ENCODE measurements at regions of chr4 and their contacts with region 1.

Region 1: GRCh38 chr4:152385551-152385950 is 150.3 kb downstream of the FBXW7 start:
- DNase-seq: no peak
- ATAC-seq: peak in 1 of 8 donors; percentile 47
- H3K4me3 ChIP-seq: no peak overlapping the region
- H3K27ac ChIP-seq: no peak overlapping the region
- H3K4me1 ChIP-seq: peaks cover 0 to 31% (median 9%) of the 10 kb centered on the region in 9 donors
- H3K27me3 ChIP-seq: no peaks in the 10 kb centered on the region
- CTCF ChIP-seq: peak; percentile 37 to 80 (median 69)

Region 2: GRCh38 chr4:151117371-151117962 is 1268.1 kb before region 1 on chr4:
- intact Hi-C with region 1: loop called in 1 of 10 experiments (anchors 10 kb)
- DNase-seq: peak in 1 of 2 donors; percentile 68
- ATAC-seq: peak in 7 of 8 donors; percentile 47 to 66 (median 59)
- H3K4me3 ChIP-seq: no peak overlapping the region
- H3K27ac ChIP-seq: peak overlapping the region in 4 of 10 donors; percentile 20 to 42 (median 34)
- H3K4me1 ChIP-seq: peaks cover 0 to 24% (median 9%) of the 10 kb centered on the region in 9 donors
- H3K27me3 ChIP-seq: no peaks in the 10 kb centered on the region
- CTCF ChIP-seq: peak; percentile 41 to 85 (median 77)

Region 3: DNA sequence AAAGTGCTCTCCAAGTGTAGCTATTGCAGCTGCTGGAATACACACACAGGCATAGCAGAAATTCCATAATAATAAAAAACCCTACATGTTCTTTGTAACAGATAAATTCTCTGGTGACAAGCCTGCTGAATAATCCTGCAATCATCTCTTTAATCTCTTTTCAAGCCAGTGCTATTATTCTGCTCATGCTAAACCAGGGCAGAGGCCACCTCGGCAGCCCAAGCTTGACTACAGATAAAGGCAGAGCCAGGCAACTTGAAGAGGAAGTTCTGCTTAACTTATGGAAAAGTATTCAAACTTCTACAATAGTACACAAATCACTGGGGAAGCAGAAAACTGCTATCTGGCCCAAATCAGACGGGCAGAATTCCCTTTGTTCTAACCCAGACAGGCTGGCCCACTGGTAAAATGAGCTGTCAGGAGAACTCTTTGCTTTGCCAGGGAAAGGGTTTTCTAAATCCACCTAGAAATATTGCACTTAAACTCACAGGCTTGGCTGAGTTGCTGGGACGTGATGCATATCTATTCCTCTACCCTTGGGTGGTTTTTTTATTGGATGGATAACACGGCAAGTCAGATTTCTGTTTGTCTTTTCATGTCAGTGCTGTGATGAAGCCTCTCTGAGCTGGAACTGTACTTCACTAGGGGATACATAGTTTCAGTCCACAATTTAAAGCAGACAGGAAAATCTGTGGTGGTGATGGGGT is 695.2 kb before region 1 on chr4:
- intact Hi-C with region 1: loop called in 2 of 10 experiments (anchors 5 to 10 kb)
- DNase-seq: no peak
- ATAC-seq: no peak
- H3K4me3 ChIP-seq: no peak overlapping the region
- H3K27ac ChIP-seq: peak overlapping the region in 9 of 10 donors; percentile 16 to 93 (median 82)
- H3K4me1 ChIP-seq: peaks cover 28 to 92% (median 52%) of the 10 kb centered on the region in 9 donors
- H3K27me3 ChIP-seq: no peaks in the 10 kb centered on the region
- CTCF ChIP-seq: no peak

Region 4: DNA sequence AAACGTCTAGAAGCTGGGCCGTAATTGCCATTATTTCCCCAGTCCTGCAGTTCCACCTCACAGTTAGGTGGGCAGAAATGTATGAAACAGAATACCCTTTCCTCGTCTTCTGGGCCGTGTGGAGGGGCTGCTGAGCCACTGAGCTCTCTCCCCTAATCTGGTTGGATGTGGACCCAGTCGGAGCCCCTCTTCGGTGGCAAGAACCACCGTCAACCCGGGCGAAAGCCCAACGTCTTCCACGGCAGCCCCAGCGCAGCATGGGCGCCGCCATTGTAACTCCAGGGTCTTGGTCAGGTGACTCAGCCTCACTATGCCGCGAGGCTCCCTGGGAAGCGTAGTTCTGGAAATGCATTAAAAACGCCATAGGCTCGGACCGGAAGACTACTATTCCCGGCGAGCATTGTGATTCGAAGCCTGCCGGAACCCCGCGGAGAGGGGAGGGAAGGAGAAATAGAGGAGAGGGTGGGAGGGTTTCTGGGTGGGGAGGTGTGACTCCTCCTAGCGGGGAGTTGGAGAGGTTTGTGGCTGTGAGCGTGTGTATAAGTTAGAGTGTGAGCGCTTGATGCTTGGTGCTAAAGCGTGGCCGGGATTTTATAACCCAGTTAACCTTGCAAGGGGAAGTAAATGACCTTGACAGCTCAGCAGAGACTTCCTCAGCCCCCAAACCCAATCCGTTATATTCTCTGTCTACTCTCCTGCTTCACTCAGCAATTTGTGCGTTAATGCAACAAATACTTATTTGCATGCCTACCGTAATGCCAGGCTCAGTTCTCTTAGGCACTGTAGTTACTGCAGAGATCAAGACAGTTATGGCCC is 624.6 kb before region 1 on chr4 and contains the start of gene GATB:
- intact Hi-C with region 1: loop called in 1 of 10 experiments (anchors 10 kb)
- DNase-seq: peak; percentile 85 to 95
- ATAC-seq: peak; percentile 99 to 100 (median 100)
- H3K4me3 ChIP-seq: peak within 1 kb of the TSS; percentile 73 to 92 (median 83)
- H3K27ac ChIP-seq: peak within 1 kb of the TSS; percentile 62 to 82 (median 76)
- H3K4me1 ChIP-seq: peaks cover 0 to 24% (median 12%) of the 10 kb centered on the region in 9 donors
- H3K27me3 ChIP-seq: peaks cover 0 to 4% (median 0%) of the 10 kb centered on the region in 7 donors
- CTCF ChIP-seq: peak; percentile 38 to 70 (median 58)
- total RNA-seq, gene GATB: 79.0 to 122 (median 88.5) TPM

Region 5: DNA sequence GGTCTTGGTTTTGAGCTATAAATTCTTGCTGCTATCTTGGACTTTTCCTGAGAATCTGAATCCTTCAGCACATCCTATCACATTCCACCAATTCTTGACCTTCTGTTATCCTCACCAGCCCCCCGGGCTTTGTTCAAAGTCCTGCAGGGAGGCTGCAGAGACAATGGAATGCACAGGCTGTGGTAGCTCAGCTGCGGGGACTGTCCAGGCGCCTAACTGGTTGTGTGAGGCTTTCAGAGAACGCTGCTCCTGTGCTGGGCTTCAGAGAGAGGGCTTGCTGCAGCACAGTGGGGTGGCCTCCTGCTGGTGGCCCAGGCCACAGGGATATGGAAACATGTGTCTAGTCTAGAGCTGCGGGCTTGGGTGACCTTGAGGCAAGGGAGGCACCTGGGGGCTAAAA is 428.4 kb before region 1 on chr4:
- intact Hi-C with region 1: loop called in 1 of 10 experiments (anchors 10 kb)
- DNase-seq: peak; percentile 16 to 19
- ATAC-seq: peak in 6 of 8 donors; percentile 11 to 69 (median 50)
- H3K4me3 ChIP-seq: no peak overlapping the region
- H3K27ac ChIP-seq: peak overlapping the region in 6 of 10 donors; percentile 52 to 79 (median 62)
- H3K4me1 ChIP-seq: peaks cover 0 to 38% (median 10%) of the 10 kb centered on the region in 9 donors
- H3K27me3 ChIP-seq: no peaks in the 10 kb centered on the region
- CTCF ChIP-seq: peak in 3 of 9 donors; percentile 12 to 24 (median 16)

Region 6: GRCh38 chr4:152045807-152046571 is 339.6 kb before region 1 on chr4:
- intact Hi-C with region 1: loop called in 2 of 10 experiments (anchors 10 kb)
- DNase-seq: peak; percentile 38 to 48
- ATAC-seq: peak; percentile 63 to 85 (median 70)
- H3K4me3 ChIP-seq: peak overlapping the region in 6 of 10 donors; percentile 16 to 32 (median 24)
- H3K27ac ChIP-seq: peak overlapping the region in 7 of 10 donors; percentile 0 to 79 (median 55)
- H3K4me1 ChIP-seq: peaks cover 2 to 13% (median 10%) of the 10 kb centered on the region in 9 donors
- H3K27me3 ChIP-seq: peaks cover 0 to 21% (median 0%) of the 10 kb centered on the region in 7 donors
- CTCF ChIP-seq: peak; percentile 34 to 72 (median 63)

Region 7: GRCh38 chr4:152112887-152113286 is 272.7 kb before region 1 on chr4:
- intact Hi-C with region 1: loop called in 1 of 10 experiments (anchors 10 kb)
- DNase-seq: no peak
- ATAC-seq: no peak
- H3K4me3 ChIP-seq: no peak overlapping the region
- H3K27ac ChIP-seq: peak overlapping the region in 1 of 10 donors; percentile 12
- H3K4me1 ChIP-seq: peaks cover 7 to 68% (median 43%) of the 10 kb centered on the region in 9 donors
- H3K27me3 ChIP-seq: no peaks in the 10 kb centered on the region
- CTCF ChIP-seq: no peak